Keratinocyte (primary cell): ENCODE measurements at regions of chr7 and their contacts with region 1.

Region 1: GRCh38 chr7:99050971-99051370 is 92.9 kb downstream of the SMURF1 start:
- DNase-seq: no peak
- H3K4me3 ChIP-seq: no peak overlapping the region
- H3K27ac ChIP-seq: no peak overlapping the region
- H3K4me1 ChIP-seq: no peaks in the 10 kb centered on the region
- H3K27me3 ChIP-seq: no peaks in the 10 kb centered on the region
- CTCF ChIP-seq: no peak

Region 2: DNA sequence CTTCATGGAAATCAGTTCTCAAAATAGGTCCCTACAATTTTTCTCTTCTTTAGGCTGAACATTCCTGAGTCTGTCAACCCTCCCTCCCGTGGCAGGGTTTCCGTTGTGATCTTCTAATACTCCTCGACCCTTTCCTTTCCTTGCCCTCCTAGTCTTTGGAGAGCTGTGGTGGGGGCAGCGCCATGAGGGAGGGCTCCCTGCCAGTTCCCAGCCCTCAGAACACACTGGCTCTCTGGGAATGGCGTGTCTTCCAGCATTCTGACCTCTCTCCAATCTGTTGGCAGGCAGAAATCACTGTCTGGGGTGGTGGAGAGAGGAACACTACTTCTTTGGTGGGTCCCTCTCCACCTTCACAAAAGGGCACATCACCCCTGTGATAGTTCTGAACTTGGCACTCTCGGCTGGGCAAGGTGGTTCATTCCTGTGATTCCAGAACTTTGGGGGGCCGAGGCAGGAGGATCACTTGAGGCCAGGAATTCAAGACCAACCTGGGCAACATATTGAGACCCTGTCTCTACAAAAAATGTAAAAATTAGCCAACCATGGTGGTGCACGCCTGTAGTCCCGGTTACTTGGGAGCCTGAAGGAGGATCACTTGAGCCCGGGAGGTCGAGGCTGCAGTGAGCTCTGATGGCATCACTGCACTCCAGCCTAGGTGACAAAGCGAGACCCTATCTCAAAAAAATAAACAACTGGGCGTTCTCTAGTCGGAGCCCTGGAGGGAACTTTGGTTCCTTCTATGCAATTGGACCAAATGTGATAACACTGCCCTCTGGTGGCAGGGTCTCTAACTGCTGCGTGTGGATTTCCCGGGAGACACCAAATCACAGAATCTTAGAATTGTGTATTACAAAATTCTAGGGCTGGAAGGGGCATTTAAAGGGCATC is 261.6 kb after region 1 on chr7:
- dilution Hi-C with region 1: loop called (anchors 25 kb)
- DNase-seq: no peak
- H3K4me3 ChIP-seq: no peak overlapping the region
- H3K27ac ChIP-seq: no peak overlapping the region
- H3K4me1 ChIP-seq: peaks cover 14% of the 10 kb centered on the region
- H3K27me3 ChIP-seq: no peaks in the 10 kb centered on the region
- CTCF ChIP-seq: peak; percentile 81 to 84 (median 84)